Aorta (tissue), 5 donors: ENCODE measurements at regions of chr1 and their contacts with region 1.

Region 1: DNA sequence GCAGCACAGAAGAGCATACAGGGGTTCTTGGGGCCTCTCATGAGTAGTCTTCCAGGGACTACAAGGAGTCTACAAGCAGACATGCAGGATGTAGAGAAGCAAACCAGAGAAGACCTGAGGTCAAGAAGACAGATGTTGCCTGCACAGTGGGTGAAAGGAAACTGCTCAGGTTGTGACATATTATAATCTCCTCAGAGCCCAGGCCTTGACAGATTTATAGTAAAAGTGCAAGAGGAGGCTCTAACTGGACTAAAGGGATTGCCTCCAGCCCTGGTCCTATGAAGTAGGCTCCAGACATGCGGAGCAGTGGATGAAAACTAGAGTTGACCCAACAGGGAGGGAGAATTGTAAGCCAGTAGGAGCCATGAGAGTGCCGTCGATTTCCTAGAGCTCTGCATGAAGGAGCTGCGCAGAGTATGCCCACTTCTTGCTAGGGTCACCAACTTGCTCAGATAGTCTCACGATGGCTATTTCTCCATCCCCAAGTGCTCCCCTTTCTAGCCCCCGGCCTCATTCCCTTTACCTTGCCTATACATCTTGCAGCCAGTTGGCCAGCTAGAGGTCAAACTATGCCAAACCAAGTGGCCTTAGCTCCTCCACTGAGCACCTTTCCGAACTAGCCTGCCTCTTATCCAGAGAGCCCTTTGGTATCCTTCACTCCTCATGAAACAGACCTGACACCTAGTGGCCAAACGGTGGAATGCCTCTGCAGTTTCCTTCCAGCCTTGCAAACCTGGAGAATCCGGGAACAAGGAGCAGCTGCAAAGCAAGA is 36.2 kb upstream of the IPO9 start:
- DNase-seq: peak; percentile 78 to 81
- ATAC-seq: peak; percentile 92
- H3K4me3 ChIP-seq: no peak overlapping the region
- H3K27ac ChIP-seq: peak overlapping the region in 1 of 2 donors; percentile 73
- H3K4me1 ChIP-seq: peaks cover 4 to 6% of the 10 kb centered on the region in 2 donors
- H3K27me3 ChIP-seq: no peaks in the 10 kb centered on the region

Region 2: DNA sequence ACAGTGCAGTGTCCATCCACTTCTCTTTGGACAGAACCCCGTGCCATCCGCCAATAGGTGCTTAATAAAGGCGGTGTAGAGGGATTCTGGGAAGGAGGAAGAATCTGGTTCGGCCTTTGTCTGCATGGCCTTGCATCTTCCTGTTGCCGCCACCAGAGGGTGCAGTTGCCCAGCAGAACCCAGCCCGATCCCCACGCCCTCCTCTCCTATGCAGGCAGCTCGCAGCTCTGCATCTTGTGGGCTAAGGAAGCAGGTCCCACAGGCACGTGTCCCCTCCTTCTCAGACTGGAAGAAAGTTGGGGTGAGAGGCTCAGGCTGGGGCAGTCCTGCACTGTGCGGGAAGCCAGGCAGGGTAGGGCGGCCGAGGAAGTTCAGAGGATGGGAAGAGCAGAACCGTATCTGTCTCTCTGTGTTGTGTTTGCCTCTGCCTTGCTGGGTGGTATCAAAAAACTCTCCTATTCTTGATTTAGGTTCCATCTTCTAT is 233.0 kb before region 1 on chr1:
- intact Hi-C with region 1: loop called (anchors 2 to 5 kb)
- DNase-seq: peak; percentile 84 to 92
- ATAC-seq: peak; percentile 93
- H3K4me3 ChIP-seq: no peak overlapping the region
- H3K27ac ChIP-seq: no peak overlapping the region
- H3K4me1 ChIP-seq: no peaks in the 10 kb centered on the region
- H3K27me3 ChIP-seq: no peaks in the 10 kb centered on the region

Region 3: GRCh38 chr1:201709564-201710295 is 83.0 kb before region 1 on chr1:
- intact Hi-C with region 1: loop called (anchors 1 kb)
- DNase-seq: peak; percentile 81 to 93
- ATAC-seq: peak; percentile 79
- H3K4me3 ChIP-seq: no peak overlapping the region
- H3K27ac ChIP-seq: peak overlapping the region in 1 of 2 donors; percentile 23
- H3K4me1 ChIP-seq: peaks cover 5 to 6% of the 10 kb centered on the region in 2 donors
- H3K27me3 ChIP-seq: no peaks in the 10 kb centered on the region

Region 4: GRCh38 chr1:201748335-201748734 is 44.4 kb before region 1 on chr1:
- intact Hi-C with region 1: loop called (anchors 2 to 5 kb)
- DNase-seq: peak; percentile 83 to 86
- ATAC-seq: peak; percentile 62
- H3K4me3 ChIP-seq: no peak overlapping the region
- H3K27ac ChIP-seq: peak overlapping the region; percentile 88 to 99
- H3K4me1 ChIP-seq: peaks cover 3 to 32% of the 10 kb centered on the region in 2 donors
- H3K27me3 ChIP-seq: no peaks in the 10 kb centered on the region

Region 5: DNA sequence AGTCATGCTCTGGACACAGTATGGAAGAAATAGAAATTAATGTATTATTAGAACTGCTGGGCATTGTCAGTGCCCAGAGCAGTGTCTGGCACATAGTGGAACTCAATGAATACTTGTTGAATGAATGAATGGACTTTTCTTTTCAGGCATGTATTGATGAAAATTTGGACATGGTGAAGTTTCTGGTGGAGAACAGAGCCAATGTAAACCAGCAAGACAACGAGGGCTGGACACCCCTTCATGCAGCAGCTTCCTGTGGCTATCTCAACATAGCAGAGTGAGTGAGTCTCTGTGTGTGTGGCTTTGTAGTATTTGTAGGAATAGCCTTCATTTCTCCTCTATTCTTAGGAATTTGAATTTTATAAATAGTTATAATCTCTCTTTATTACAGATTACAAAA is 623.9 kb after region 1 on chr1:
- intact Hi-C with region 1: no loop called
- DNase-seq: no peak
- ATAC-seq: no peak
- H3K4me3 ChIP-seq: no peak overlapping the region
- H3K27ac ChIP-seq: no peak overlapping the region
- H3K4me1 ChIP-seq: peaks cover 0 to 1% of the 10 kb centered on the region in 2 donors
- H3K27me3 ChIP-seq: no peaks in the 10 kb centered on the region